ENCODE measurements at regions of chr14 and their contacts with region 1.

Region 1: DNA sequence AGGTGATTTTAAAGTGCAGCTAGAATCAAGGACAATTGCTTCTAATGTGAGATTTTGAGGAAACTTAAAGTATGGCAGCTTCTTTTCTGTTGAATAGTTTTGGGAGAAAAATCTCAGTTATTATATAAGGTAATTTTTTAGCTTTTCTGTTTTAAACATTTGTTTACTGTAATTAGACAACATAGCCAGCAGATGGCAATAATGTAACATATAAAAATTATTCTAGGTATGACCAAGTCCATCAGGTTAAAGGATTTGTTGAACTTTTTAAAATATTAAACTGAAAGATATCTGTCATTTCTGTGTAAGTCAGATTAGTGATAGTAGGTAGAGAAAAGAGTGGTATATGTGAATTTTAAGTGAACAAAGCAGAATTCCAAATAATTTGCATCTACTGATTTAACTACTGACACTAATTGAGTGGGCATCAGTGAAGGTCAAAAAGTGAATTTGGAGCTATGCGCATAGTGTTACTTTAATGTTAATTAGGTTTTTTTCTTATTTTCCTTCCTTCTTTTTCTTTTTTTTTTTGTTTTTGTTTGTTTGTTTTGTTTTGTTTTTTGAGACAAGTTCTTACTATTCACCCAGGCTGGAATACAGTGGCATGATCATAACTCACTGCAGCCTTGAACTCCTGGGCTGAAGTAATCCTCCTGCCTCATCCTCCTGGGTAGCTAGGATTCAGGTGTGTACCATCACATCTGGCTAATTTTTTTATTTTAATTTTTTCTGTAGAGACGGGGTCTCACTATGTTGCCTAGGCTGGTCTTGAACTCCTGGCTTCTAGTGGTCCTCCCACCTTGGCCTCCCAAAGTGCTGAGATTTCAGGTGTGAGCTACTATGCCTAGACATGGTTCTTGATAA is 18.6 kb downstream of the PRORP start:
- DNase-seq: no peak
- H3K4me3 ChIP-seq: no peak overlapping the region
- H3K27ac ChIP-seq: no peak overlapping the region
- H3K4me1 ChIP-seq: no peaks in the 10 kb centered on the region
- H3K27me3 ChIP-seq: no peaks in the 10 kb centered on the region
- CTCF ChIP-seq: peak; percentile 43

Region 2: DNA sequence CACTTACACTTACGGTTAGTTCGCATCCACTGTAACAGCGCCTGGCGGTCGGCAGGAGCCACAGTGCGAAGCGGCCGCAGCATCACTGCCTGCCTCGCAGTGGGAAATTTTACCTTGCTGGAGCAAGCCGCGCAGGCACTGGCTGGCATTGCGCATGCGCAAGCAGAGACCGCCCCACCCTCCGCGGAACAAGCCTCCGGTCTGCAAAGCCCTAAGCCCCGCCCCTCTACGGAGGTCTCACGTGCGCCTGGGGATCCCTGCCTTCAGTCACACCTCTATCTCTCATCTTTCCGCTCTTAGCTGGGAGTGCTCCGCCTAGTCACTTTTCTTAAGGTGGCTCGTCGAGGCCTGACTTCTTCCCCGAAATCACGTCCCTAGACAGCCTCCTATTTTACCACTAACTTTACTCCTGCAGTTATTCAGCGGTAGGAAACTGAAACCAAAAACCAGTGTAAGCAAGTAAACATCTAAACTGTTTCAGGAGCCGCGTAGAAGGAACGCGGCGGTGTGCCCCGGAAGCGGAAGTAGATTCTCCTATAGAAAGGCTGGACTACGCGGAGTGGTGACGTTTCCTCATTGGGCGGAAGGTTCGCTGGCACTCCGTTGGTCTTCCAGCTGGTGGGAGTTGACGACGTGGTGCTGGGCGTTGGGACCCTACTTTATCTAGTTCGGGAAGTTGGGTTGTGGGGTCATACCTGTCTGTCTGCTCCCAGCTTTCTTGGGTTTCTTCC is 158.4 kb before region 1 on chr14 and contains the start of gene SRP54:
- intact Hi-C with region 1: no loop called
- DNase-seq: peak; percentile 100
- H3K4me3 ChIP-seq: peak within 1 kb of the TSS; percentile 83
- H3K27ac ChIP-seq: peak within 1 kb of the TSS; percentile 99
- H3K4me1 ChIP-seq: peaks cover 7% of the 10 kb centered on the region
- H3K27me3 ChIP-seq: no peaks in the 10 kb centered on the region
- CTCF ChIP-seq: no peak
- total RNA-seq, gene SRP54: 43.5 to 45.6 TPM

Region 3: DNA sequence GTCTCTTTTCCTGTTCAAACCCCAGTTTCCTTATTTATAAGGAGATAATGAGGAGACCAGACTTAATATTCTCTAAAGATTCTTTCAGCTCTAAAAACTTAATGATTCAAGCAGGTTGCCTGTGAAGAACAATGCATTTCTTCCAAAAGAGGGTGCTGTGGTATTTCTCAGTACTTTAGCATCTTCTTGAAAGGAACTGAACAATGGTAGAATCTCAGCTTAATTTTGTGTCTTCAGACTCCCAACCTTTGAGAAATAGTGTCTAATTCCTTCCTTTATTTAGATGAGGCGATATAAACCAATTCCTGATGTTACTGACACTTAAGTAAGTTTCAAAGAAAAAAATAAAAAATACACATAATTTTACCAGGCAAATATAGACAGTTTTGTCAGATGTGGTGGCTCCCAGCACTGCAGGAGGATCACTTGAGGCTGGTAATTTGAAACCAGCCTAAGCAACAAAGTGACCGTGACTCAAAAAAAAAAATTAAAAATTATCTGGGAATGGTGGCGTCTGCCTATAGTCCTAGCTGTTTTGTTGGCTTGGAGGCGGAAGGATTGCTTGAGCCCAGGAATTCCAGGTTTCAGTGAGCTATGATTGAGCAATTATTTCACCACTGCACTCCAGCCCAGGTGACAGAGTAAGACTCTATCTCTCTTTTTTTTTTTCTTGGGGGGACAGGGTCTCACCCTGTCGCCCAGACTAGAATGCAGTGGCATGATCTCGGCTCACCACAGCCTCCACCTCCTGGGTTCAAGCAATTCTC is 74.3 kb after region 1 on chr14:
- intact Hi-C with region 1: loop called (anchors 5 kb)
- DNase-seq: no peak
- H3K4me3 ChIP-seq: no peak overlapping the region
- H3K27ac ChIP-seq: no peak overlapping the region
- H3K4me1 ChIP-seq: no peaks in the 10 kb centered on the region
- H3K27me3 ChIP-seq: no peaks in the 10 kb centered on the region
- CTCF ChIP-seq: no peak

Region 4: GRCh38 chr14:35414365-35414764 is 273.4 kb after region 1 on chr14:
- intact Hi-C with region 1: loop called (anchors 2 kb)
- DNase-seq: no peak
- H3K4me3 ChIP-seq: no peak overlapping the region
- H3K27ac ChIP-seq: no peak overlapping the region
- H3K4me1 ChIP-seq: no peaks in the 10 kb centered on the region
- H3K27me3 ChIP-seq: no peaks in the 10 kb centered on the region
- CTCF ChIP-seq: no peak

Measured in colonic mucosa (tissue), 4 donors.